Activated CD8-positive, alpha-beta T cell treated with anti-CD3 and anti-CD28 coated beads for 36 hours (primary cell): ENCODE measurements at regions of chr3 and their contacts with region 1.

Region 1: DNA sequence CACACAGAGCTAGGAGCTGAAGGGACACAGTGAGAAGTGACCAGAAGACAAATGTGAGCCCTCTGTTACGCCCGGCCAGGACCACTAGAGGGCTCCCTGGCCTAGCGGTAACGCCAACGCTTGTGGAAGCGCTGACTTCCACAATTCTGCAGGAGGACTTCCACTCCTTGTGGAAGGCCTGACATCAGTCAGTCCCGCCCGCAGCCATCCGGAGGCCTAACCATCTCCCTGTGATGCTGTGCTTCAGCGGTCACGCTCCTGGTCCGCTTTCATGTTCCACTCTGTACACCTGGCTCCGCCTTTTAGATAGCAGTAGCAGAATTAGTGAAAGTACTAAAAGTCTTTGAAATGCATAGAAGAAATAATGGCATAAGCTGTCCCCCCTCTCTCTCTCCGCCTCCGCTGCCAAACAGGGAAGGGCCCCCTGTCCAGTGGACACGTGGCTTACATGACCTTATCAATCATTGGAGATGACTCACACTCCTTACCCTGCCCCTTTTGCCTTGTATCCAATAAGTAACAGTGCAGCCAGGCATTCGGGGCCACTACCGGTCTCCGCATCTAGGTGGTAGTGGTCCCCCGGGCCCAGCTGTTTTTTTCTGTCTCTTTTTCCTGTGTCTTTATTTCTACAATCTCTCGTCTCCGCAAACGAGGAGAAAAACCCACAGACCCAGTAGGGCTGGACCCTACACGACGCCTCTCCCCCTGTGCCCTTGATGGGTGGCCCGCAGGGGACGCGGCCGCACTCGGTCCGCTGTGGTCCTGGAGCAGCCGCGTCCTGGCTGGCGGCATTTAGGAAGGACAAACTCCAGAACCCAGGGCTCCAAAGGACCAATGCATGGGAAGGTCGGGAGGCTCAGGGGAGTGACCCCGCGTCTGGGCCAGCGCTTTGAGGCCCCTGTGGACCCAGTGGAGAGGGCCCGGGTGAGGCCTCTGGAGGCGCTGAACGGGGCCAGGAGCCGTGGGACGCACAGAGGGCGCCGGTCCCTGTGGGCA is 27.0 kb upstream of the RPL32 start:
- DNase-seq: peak; percentile 80
- ATAC-seq: peak; percentile 81
- H3K4me3 Mint-ChIP-seq: peak overlapping the region; percentile 67
- H3K27ac Mint-ChIP-seq: no peak overlapping the region
- H3K4me1 Mint-ChIP-seq: peaks cover 6% of the 10 kb centered on the region
- H3K27me3 Mint-ChIP-seq: peaks cover 7% of the 10 kb centered on the region
- CTCF ChIP-seq: peak; percentile 92

Region 2: DNA sequence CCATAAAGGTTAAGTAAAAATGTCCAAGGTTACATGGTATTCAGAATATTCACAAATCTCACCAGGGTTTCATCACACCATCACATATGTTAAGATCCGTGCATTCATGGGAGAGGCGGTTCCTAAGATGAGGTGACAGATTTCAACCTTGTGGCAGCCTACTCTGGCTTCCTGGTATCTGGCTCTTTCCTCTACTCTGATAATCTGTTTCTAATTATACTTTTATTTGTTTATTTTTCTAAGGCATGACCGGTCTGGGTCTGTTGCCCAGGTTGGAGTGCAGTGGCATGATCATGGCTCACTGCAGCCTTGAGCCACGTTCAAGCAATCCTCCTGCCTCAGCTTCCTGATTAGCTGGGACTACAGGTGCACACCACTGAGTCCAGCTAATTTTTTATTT is 238.8 kb before region 1 on chr3:
- CTCF ChIA-PET with region 1: no interaction called
- POLR2A ChIA-PET with region 1: no interaction called
- intact Hi-C with region 1: no loop called
- DNase-seq: no peak
- ATAC-seq: no peak
- H3K4me3 Mint-ChIP-seq: no peak overlapping the region
- H3K27ac Mint-ChIP-seq: no peak overlapping the region
- H3K4me1 Mint-ChIP-seq: peaks cover 65% of the 10 kb centered on the region
- H3K27me3 Mint-ChIP-seq: no peaks in the 10 kb centered on the region
- CTCF ChIP-seq: no peak

Region 3: GRCh38 chr3:12886106-12886679 is 17.9 kb after region 1 on chr3:
- CTCF ChIA-PET with region 1: interaction called, 36 read pairs
- POLR2A ChIA-PET with region 1: no interaction called
- intact Hi-C with region 1: no loop called
- DNase-seq: peak; percentile 49
- ATAC-seq: peak; percentile 66
- H3K4me3 Mint-ChIP-seq: peak overlapping the region; percentile 41
- H3K27ac Mint-ChIP-seq: peak overlapping the region; percentile 46
- H3K4me1 Mint-ChIP-seq: peaks cover 13% of the 10 kb centered on the region
- H3K27me3 Mint-ChIP-seq: peaks cover 16% of the 10 kb centered on the region
- CTCF ChIP-seq: no peak